CD4-positive, alpha-beta memory T cell (primary cell): ENCODE measurements at regions of chr10 and their contacts with region 1.

Region 1: DNA sequence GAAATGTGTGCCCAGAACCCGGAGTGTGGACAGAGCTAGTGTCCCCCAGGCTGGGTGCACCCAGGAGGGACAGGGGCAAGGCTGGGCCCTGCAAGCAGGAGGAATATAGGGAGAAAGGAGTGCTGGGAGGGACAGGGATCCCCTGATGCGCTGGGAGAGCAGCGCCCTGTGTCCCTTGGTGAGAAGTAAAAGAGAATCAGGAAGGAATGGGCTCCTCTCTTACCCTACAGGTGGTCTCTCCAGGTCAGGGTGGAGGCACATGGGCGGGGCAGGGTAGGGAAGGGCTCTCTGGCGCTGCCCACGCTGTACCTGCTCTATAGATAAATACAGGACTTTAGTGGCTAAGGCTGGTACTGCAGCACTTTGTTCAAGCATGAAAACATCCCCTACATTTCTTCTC is 753.8 kb downstream of the GRID1 start:
- DNase-seq: peak in 3 of 5 donors; percentile 18 to 24 (median 23)
- H3K4me3 ChIP-seq: peak overlapping the region in 1 of 2 donors; percentile 10
- H3K4me3 Mint-ChIP-seq: peak overlapping the region in 7 of 8 donors; percentile 78 to 88 (median 84)
- H3K27ac ChIP-seq: no peak overlapping the region
- H3K27ac Mint-ChIP-seq: peak overlapping the region; percentile 77 to 90 (median 81)
- H3K4me1 ChIP-seq: peaks cover 43% of the 10 kb centered on the region
- H3K4me1 Mint-ChIP-seq: peaks cover 41 to 70% (median 53%) of the 10 kb centered on the region in 4 donors
- H3K27me3 ChIP-seq: no peaks in the 10 kb centered on the region
- H3K27me3 Mint-ChIP-seq: no peaks in the 10 kb centered on the region

Region 2: DNA sequence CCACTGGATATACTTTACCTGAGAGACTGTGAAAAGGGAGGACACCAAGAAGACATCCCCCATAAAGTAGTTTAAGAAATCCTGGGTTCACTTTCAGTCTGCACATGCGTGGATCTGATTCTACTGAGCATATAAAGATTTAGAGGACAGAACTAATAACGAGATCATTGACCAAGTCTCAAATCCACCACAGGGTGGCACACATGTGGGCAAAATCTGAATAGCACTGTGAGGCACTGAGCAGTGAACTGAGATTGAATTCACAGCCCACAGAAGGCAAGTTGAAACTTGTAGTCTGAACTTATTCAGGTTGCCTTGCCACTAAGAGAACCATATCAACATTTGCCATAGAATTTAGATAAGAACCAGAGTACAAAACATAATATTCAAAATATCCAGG is 64.8 kb before region 1 on chr10:
- CTCF ChIA-PET with region 1: interaction called, 5 read pairs
- POLR2A ChIA-PET with region 1: no interaction called
- intact Hi-C with region 1: loop called (anchors 2 kb)
- DNase-seq: peak in 4 of 5 donors; percentile 13 to 33 (median 31)
- H3K4me3 ChIP-seq: no peak overlapping the region
- H3K4me3 Mint-ChIP-seq: no peak overlapping the region
- H3K27ac ChIP-seq: no peak overlapping the region
- H3K27ac Mint-ChIP-seq: no peak overlapping the region
- H3K4me1 ChIP-seq: no peaks in the 10 kb centered on the region
- H3K4me1 Mint-ChIP-seq: peaks cover 0 to 6% (median 2%) of the 10 kb centered on the region in 4 donors
- H3K27me3 ChIP-seq: no peaks in the 10 kb centered on the region
- H3K27me3 Mint-ChIP-seq: peaks cover 12 to 14% of the 10 kb centered on the region in 2 donors

Region 3: DNA sequence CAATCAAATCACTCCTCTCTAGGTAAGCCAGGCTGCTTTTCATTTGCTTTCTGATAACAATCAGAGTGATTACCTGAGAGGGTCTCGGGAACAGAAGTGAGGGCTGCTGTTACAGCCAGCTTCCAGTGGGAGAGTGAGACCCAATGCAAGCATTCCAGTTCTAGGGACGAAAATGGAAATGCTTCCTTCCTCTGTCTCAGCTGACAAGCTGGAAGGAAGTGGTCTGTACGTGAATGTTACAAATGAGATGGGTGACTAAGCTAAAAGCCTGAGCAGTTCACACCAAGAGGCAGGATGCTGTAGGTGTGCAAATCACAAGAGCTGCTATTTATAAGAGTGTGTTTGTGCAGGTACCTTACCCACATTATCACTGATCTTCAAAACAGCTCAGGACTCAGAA is 18.6 kb before region 1 on chr10:
- CTCF ChIA-PET with region 1: interaction called, 39 read pairs
- POLR2A ChIA-PET with region 1: interaction called, 13 read pairs
- intact Hi-C with region 1: loop called (anchors 2 kb)
- DNase-seq: no peak
- H3K4me3 ChIP-seq: no peak overlapping the region
- H3K4me3 Mint-ChIP-seq: peak overlapping the region in 4 of 8 donors; percentile 26 to 79 (median 52)
- H3K27ac ChIP-seq: no peak overlapping the region
- H3K27ac Mint-ChIP-seq: peak overlapping the region; percentile 37 to 91 (median 71)
- H3K4me1 ChIP-seq: peaks cover 15% of the 10 kb centered on the region
- H3K4me1 Mint-ChIP-seq: peaks cover 15 to 30% (median 25%) of the 10 kb centered on the region in 4 donors
- H3K27me3 ChIP-seq: no peaks in the 10 kb centered on the region
- H3K27me3 Mint-ChIP-seq: no peaks in the 10 kb centered on the region

Region 4: GRCh38 chr10:85702768-85703167 is 89.9 kb after region 1 on chr10:
- CTCF ChIA-PET with region 1: no interaction called
- POLR2A ChIA-PET with region 1: no interaction called
- intact Hi-C with region 1: no loop called
- DNase-seq: no peak
- H3K4me3 ChIP-seq: no peak overlapping the region
- H3K4me3 Mint-ChIP-seq: no peak overlapping the region
- H3K27ac ChIP-seq: no peak overlapping the region
- H3K27ac Mint-ChIP-seq: no peak overlapping the region
- H3K4me1 ChIP-seq: no peaks in the 10 kb centered on the region
- H3K4me1 Mint-ChIP-seq: no peaks in the 10 kb centered on the region
- H3K27me3 ChIP-seq: no peaks in the 10 kb centered on the region
- H3K27me3 Mint-ChIP-seq: peaks cover 18 to 21% of the 10 kb centered on the region in 2 donors